GM13976 (cell line): ENCODE measurements at regions of chr19 and their contacts with region 1.

Region 1: GRCh38 chr19:7366701-7367420 is 18.1 kb downstream of the ARHGEF18 start:
- DNase-seq: peak; percentile 80
- CTCF ChIP-seq: peak; percentile 22

Region 2: DNA sequence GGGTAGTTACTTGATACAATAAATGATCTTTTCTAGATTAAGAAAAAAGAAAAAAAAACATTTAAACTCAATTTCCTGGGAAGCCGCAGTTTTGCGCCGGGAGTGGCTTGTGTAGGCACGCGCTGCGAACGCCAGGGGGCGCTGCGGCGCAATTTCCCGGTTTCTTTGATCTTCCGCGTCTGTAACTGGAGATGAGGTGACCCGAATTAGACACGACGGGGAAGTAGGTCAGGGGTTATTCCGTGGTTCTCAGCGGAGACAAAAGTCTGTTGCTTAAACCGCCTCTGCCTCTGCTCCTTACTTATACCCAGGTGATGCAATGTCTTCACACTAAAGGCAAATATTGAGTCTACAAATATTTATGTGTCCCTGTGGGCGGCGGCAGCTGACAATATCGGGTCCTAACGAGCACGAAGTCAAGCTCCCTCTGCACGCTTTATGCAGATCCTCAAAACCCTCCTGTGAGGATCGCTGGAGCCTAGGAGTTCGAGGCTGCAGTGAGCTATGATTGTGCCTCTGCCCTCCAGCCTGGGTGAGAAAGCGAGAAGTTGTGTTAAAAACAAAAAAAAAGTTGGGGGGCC is 285.3 kb after region 1 on chr19:
- in situ Hi-C with region 1: loop called (anchors 25 kb)
- DNase-seq: peak; percentile 93
- CTCF ChIP-seq: peak; percentile 95